ENCODE measurements at regions of chr4 and their contacts with region 1.

Region 1: GRCh38 chr4:159498446-159499115 is 395.7 kb downstream of the RAPGEF2 start:
- DNase-seq: no peak
- ATAC-seq: no peak
- H3K4me3 ChIP-seq: no peak overlapping the region
- H3K27ac ChIP-seq: no peak overlapping the region
- H3K4me1 ChIP-seq: peaks cover 0 to 13% (median 0%) of the 10 kb centered on the region in 12 donors
- H3K27me3 ChIP-seq: peaks cover 0 to 5% (median 0%) of the 10 kb centered on the region in 9 donors
- CTCF ChIP-seq: no peak
- POLR2A ChIP-seq: no peak

Region 2: DNA sequence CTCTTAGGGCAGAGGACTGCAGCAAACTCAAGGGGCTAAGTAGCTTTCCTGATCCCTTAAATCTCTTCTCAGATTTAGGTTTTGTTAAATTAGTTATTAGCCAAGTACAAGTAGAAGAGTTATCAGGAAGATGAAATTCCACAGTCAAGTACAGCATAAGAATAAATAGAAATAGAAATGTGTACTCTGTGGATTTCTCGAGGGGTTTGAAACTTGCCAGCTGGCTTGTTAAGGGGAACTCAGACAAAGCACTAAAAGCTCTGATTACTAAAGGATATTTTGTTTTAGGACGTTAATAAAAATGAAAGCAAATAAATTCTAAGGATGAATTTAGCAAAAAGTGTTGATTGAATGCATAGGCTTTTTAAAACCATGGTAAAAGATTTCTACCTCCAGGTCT is 258.9 kb after region 1 on chr4:
- intact Hi-C with region 1: loop called in 1 of 10 experiments (anchors 10 kb)
- DNase-seq: no peak
- ATAC-seq: no peak
- H3K4me3 ChIP-seq: no peak overlapping the region
- H3K27ac ChIP-seq: no peak overlapping the region
- H3K4me1 ChIP-seq: no peaks in the 10 kb centered on the region
- H3K27me3 ChIP-seq: no peaks in the 10 kb centered on the region
- CTCF ChIP-seq: no peak
- POLR2A ChIP-seq: no peak

Measured in heart left ventricle (tissue), 16 donors.